ENCODE measurements at regions of chr10 and their contacts with region 1.

Region 1: DNA sequence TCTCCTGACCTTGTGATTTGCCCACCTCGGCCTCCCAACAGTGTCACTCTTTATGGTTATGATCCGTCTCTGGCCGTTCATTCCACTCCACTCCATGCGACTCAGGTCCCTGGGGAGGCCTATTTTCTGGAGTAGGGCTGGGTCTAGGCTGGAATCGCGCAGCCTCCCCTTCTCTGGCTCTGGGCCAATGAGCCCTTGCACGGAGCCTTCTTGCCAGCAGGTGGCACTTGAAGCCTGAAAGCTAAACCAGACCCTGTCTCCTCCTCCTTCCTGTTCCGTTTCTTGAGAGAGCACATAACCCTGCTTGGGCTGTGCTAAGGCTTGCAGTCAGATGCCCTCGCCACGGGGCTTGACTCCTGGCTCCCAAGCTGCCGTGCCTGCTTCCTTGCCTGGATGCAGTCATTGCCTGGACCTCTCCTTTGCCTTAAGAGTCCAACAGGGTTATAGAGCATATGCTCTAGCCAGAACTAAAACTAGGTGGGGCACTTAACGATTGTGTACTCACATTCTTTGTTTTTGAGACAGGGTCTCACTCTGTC is 9.6 kb upstream of the DNAJB12 start:
- DNase-seq: peak; percentile 92
- H3K4me3 Mint-ChIP-seq: no peak overlapping the region
- H3K27ac Mint-ChIP-seq: peak overlapping the region; percentile 86
- H3K4me1 Mint-ChIP-seq: peaks cover 28% of the 10 kb centered on the region
- H3K27me3 Mint-ChIP-seq: no peaks in the 10 kb centered on the region

Region 2: DNA sequence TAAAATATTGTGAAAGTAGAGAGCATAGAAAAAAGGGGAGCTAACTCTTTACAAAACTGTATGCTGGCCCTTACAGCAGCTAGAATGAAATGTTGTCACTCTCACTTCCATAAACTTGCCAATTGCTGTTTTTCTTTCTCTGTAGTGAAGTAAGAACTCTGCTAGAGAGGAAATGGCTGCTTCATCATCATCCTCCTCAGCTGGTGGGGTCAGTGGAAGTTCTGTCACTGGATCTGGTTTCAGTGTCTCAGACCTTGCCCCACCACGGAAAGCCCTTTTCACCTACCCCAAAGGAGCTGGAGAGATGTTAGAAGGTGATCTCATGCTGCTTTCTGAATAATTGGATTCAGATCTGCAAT is 140.6 kb before region 1 on chr10:
- CTCF ChIA-PET with region 1: no interaction called
- POLR2A ChIA-PET with region 1: no interaction called
- DNase-seq: no peak
- H3K4me3 Mint-ChIP-seq: peak overlapping the region; percentile 4
- H3K27ac Mint-ChIP-seq: peak overlapping the region; percentile 69
- H3K4me1 Mint-ChIP-seq: peaks cover 49% of the 10 kb centered on the region
- H3K27me3 Mint-ChIP-seq: no peaks in the 10 kb centered on the region

Region 3: DNA sequence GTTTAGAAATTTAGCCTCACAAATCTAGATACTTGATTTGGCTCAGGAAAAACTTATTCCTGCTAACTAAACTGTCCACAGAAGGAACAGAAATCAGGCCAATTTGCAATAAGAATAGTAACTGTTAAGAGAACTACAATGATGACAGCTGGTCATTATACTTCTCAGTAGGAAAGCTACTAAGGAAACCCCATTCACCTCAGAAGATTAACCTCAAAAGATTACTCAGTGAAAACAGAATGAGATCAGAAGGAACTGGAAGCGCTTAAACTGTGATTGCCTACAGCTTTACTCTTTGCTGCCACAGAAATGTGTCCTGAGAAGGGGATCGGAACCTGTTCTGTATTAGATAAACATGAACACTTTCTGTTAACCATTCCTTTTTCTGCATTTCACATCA is 14.8 kb after region 1 on chr10:
- CTCF ChIA-PET with region 1: interaction called, 10 read pairs
- POLR2A ChIA-PET with region 1: no interaction called
- DNase-seq: no peak
- H3K4me3 Mint-ChIP-seq: no peak overlapping the region
- H3K27ac Mint-ChIP-seq: no peak overlapping the region
- H3K4me1 Mint-ChIP-seq: peaks cover 12% of the 10 kb centered on the region
- H3K27me3 Mint-ChIP-seq: no peaks in the 10 kb centered on the region